Ovary (tissue), 10 donors: ENCODE measurements at regions of chr12 and their contacts with region 1.

Region 1: DNA sequence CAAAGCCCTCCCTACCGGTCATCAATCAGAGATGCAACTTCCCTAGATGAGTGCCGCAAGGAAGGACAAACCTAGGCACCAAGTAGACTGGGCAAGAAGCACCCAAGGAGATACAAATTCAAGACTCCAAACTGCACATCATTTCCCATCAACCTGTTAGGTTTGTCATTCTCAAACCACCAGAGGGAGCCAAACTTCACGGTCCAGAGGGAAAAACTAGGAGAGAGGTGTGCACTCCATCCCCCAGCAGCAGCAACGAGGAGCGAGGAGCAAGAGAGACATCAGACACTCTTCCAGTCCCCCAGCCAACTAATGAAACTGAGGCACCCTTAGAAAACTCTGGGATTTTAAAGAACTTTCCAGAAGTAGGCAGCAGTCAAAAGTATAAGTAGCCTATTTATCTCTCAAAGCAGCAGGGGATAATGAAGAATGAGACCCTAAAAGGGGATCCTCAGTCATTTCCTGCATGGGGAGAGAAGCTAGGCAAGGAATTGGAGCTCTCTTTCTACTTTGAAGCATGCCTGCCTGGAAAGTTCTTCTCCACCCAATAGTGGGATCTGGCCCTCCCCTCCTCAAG is 37.0 kb upstream of the NT5DC3 start:
- DNase-seq: peak in 4 of 5 donors; percentile 36 to 63 (median 42)
- H3K4me3 ChIP-seq: no peak overlapping the region
- H3K27ac ChIP-seq: no peak overlapping the region
- H3K4me1 ChIP-seq: no peaks in the 10 kb centered on the region
- H3K27me3 ChIP-seq: no peaks in the 10 kb centered on the region
- CTCF ChIP-seq: peak; percentile 34 to 45 (median 44)
- EP300 ChIP-seq: no peak
- POLR2A ChIP-seq: no peak

Region 2: GRCh38 chr12:103771466-103771865 is 106.6 kb before region 1 on chr12:
- intact Hi-C with region 1: loop called in 1 of 4 experiments (anchors 10 kb)
- DNase-seq: peak; percentile 25 to 50 (median 29)
- H3K4me3 ChIP-seq: no peak overlapping the region
- H3K27ac ChIP-seq: no peak overlapping the region
- H3K4me1 ChIP-seq: peaks cover 9% of the 10 kb centered on the region
- H3K27me3 ChIP-seq: no peaks in the 10 kb centered on the region
- CTCF ChIP-seq: peak in 1 of 3 donors; percentile 21
- EP300 ChIP-seq: no peak
- POLR2A ChIP-seq: no peak

Region 3: DNA sequence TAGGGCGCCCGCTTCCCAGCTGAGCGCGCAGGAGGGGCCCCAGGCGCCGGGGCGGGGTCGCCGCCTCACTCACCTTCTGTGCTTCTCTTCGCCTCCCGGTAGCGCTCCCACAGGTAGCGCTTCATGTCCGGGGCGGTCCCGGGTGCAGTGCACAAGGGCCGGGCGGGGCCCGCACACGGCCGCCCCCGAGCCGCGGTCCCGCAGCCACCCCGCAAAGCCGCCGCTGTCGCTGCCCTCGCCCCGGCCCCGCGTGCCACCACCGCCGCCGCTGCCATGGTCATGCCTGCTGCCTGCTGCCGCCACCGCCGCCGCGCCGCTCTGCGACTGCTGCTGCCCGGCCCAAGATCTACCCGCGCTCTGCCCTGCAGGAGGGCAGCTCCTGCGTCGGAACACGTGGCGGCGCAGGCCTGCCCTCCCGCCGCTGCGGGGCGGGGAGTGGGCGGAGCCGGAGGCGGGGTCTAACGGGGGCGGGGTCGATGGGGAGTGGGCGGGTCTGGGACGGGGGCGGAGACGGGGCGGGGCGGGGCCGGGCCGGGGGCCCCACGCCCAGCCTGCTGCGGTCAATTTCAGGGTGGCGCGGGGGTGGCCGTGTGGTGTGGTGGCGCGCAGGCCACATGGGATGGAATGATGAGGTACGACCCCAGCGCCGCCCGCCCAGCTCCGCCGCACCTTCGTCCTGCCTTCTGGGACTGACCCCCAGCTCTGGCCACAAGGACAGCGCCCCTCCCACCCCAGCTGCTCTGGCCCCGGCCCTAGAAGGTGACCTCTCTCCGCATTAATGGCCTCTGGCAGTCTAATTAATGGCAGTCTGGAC is 36.9 kb before region 1 on chr12 and contains the start of gene NT5DC3:
- intact Hi-C with region 1: no loop called
- DNase-seq: peak; percentile 78 to 89 (median 86)
- H3K4me3 ChIP-seq: peak within 1 kb of the TSS; percentile 87
- H3K27ac ChIP-seq: peak within 1 kb of the TSS; percentile 9 to 17
- H3K4me1 ChIP-seq: peaks cover 1% of the 10 kb centered on the region
- H3K27me3 ChIP-seq: no peaks in the 10 kb centered on the region
- CTCF ChIP-seq: peak in 2 of 3 donors; percentile 16 to 17
- EP300 ChIP-seq: no peak
- POLR2A ChIP-seq: peak; percentile 41
- total RNA-seq, gene NT5DC3: 4.6 to 9.3 (median 7.5) TPM

Region 4: DNA sequence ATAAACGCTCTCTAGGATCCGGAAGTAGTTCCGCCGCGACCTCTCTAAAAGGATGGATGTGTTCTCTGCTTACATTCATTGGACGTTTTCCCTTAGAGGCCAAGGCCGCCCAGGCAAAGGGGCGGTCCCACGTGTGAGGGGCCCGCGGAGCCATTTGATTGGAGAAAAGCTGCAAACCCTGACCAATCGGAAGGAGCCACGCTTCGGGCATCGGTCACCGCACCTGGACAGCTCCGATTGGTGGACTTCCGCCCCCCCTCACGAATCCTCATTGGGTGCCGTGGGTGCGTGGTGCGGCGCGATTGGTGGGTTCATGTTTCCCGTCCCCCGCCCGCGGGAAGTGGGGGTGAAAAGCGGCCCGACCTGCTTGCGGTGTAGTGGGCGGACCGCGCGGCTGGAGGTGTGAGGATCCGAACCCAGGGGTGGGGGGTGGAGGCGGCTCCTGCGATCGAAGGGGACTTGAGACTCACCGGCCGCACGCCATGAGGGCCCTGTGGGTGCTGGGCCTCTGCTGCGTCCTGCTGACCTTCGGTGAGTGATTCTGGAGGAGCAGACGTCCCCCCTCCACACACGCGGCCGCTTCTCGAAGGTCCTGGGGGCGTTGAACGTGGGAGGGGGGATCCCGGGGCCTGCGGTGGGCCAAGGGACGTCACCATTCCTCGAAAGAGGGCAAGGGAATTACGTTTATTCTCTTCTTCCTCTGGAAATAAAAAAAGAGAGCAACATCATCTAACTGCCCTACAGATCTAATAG is 52.2 kb after region 1 on chr12 and contains the start of gene HSP90B1:
- intact Hi-C with region 1: loop called in 1 of 4 experiments (anchors 10 kb)
- DNase-seq: peak; percentile 99 to 100 (median 99)
- H3K4me3 ChIP-seq: peak within 1 kb of the TSS; percentile 62
- H3K27ac ChIP-seq: peak within 1 kb of the TSS; percentile 89 to 99
- H3K4me1 ChIP-seq: peaks cover 3% of the 10 kb centered on the region
- H3K27me3 ChIP-seq: no peaks in the 10 kb centered on the region
- CTCF ChIP-seq: no peak
- EP300 ChIP-seq: no peak
- POLR2A ChIP-seq: peak; percentile 92
- total RNA-seq, gene HSP90B1: 217 to 777 (median 442) TPM